ENCODE measurements at regions of chr12 and their contacts with region 1.

Region 1: GRCh38 chr12:57377103-57377840 is 53.6 kb downstream of the R3HDM2 start:
- DNase-seq: no peak
- H3K4me3 ChIP-seq: no peak overlapping the region
- H3K27ac ChIP-seq: no peak overlapping the region
- H3K4me1 ChIP-seq: no peaks in the 10 kb centered on the region
- CTCF ChIP-seq: no peak

Region 2: DNA sequence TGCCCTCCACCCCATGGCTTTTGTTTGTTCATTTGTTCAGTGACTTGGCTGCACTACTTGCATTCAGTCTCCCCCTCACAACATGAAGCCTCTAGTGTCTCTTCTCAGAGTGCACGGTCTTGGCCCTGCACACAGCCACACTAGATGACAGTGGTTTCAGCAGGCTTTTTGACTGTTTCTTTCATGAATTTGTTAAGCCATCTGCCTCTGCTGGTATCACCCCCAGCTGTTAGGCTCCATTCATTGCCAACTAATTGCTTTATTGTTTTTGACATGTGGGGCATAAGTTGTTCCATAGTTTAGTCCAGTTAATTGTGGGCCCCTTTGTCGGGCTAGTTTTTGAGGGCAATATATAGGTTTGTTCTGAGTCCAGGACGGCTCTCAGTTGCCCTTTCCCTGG is 335.4 kb after region 1 on chr12:
- CTCF ChIA-PET with region 1: no interaction called
- POLR2A ChIA-PET with region 1: interaction called, 12 read pairs
- intact Hi-C with region 1: no loop called
- DNase-seq: no peak
- H3K4me3 ChIP-seq: no peak overlapping the region
- H3K27ac ChIP-seq: no peak overlapping the region
- H3K4me1 ChIP-seq: peaks cover 29% of the 10 kb centered on the region
- CTCF ChIP-seq: no peak